Transverse colon (tissue), 4 donors: ENCODE measurements at regions of chr1 and their contacts with region 1.

Region 1: GRCh38 chr1:117527566-117528102 is 78.2 kb upstream of the TENT5C start:
- DNase-seq: no peak
- H3K4me3 ChIP-seq: no peak overlapping the region
- H3K27ac ChIP-seq: no peak overlapping the region
- H3K4me1 ChIP-seq: peaks cover 0 to 9% (median 6%) of the 10 kb centered on the region in 4 donors
- H3K27me3 ChIP-seq: no peaks in the 10 kb centered on the region
- CTCF ChIP-seq: no peak
- EP300 ChIP-seq: no peak
- POLR2A ChIP-seq: no peak

Region 2: GRCh38 chr1:117059678-117060440 is 467.8 kb before region 1 on chr1 and contains the start of gene TTF2:
- in situ Hi-C with region 1: no loop called
- intact Hi-C with region 1: no loop called
- DNase-seq: peak; percentile 95
- H3K4me3 ChIP-seq: peak within 1 kb of the TSS; percentile 52 to 97 (median 70)
- H3K27ac ChIP-seq: peak within 1 kb of the TSS; percentile 88 to 93 (median 90)
- H3K4me1 ChIP-seq: peaks cover 0 to 22% (median 8%) of the 10 kb centered on the region in 4 donors
- H3K27me3 ChIP-seq: no peaks in the 10 kb centered on the region
- CTCF ChIP-seq: peak in 4 of 5 experiments; percentile 19 to 54 (median 32)
- EP300 ChIP-seq: no peak
- POLR2A ChIP-seq: peak; percentile 68
- total RNA-seq, gene TTF2: 9.6 to 25.9 (median 16.6) TPM

Region 3: DNA sequence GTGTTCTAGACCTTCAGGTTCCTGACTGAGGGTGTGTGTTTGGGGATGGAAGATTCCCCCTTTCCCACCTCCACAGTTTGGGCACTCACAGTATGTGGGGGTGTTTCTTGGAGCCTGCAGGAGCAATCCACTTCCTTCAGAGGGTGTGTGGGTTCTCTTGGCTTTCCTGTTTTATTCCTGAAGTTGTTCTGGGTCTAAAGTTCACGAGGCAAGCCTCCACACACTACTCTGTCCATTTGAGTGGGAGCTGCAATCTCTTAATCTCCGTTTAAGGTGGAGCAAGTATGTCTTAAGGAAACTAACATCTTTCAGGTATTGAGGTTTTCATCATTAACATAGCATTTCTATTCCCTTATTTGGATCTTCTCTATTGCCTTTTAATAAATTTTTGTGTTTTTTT is 220.0 kb after region 1 on chr1:
- in situ Hi-C with region 1: loop called (anchors 5 to 10 kb)
- intact Hi-C with region 1: no loop called
- DNase-seq: no peak
- H3K4me3 ChIP-seq: no peak overlapping the region
- H3K27ac ChIP-seq: no peak overlapping the region
- H3K4me1 ChIP-seq: peaks cover 0 to 5% (median 2%) of the 10 kb centered on the region in 4 donors
- H3K27me3 ChIP-seq: no peaks in the 10 kb centered on the region
- CTCF ChIP-seq: no peak
- EP300 ChIP-seq: no peak
- POLR2A ChIP-seq: no peak